ENCODE measurements at regions of chr10 and their contacts with region 1.

Region 1: DNA sequence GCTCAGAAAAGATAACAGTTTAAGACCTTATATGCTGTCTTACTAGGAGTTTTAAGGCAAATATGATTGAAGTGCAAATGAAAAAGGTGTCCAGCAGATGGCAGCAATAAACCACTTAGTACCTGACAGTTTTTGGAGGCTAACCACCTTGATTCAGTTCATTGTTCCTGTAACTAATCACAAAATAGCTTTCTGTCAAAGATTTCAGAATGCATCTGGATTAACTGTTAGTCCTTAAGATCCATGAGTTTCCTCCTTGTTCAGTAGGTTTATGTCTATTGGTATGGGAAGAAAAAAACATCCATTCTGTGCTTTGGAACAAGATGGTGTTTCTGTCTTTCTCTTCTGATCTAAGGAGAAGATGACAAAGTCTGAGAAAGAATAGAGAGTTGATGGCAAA is 46.6 kb downstream of the CCSER2 start:
- DNase-seq: peak; percentile 29
- H3K4me3 ChIP-seq: no peak overlapping the region
- H3K27ac ChIP-seq: no peak overlapping the region; a peak in 1 of 4 replicates
- H3K4me1 ChIP-seq: no peaks in the 10 kb centered on the region; a peak in 1 of 4 replicates
- H3K27me3 ChIP-seq: no peaks in the 10 kb centered on the region
- CTCF ChIP-seq: peak; percentile 83
- EP300 ChIP-seq: no peak
- RAD21 ChIP-seq: peak; percentile 89

Region 2: GRCh38 chr10:84264611-84265141 is 110.3 kb before region 1 on chr10:
- CTCF ChIA-PET with region 1: interaction called, 16 read pairs
- POLR2A ChIA-PET with region 1: no interaction called
- DNase-seq: peak; percentile 78
- H3K4me3 ChIP-seq: peak overlapping the region in 1 of 2 experiments; percentile 43; a peak in 1 of 4 replicates
- H3K27ac ChIP-seq: no peak overlapping the region
- H3K4me1 ChIP-seq: peaks cover 4 to 11% of the 10 kb centered on the region in 2 experiments; a peak in 3 of 4 replicates
- H3K27me3 ChIP-seq: no peaks in the 10 kb centered on the region
- CTCF ChIP-seq: peak; percentile 96
- EP300 ChIP-seq: no peak
- RAD21 ChIP-seq: peak; percentile 93

Region 3: GRCh38 chr10:84296091-84296981 is 78.7 kb before region 1 on chr10:
- CTCF ChIA-PET with region 1: no interaction called
- POLR2A ChIA-PET with region 1: no interaction called
- DNase-seq: no peak
- H3K4me3 ChIP-seq: no peak overlapping the region
- H3K27ac ChIP-seq: peak overlapping the region in 1 of 2 experiments; percentile 83; a peak in 2 of 4 replicates
- H3K4me1 ChIP-seq: peaks cover 7 to 15% of the 10 kb centered on the region in 2 experiments; a peak in 2 of 4 replicates
- H3K27me3 ChIP-seq: no peaks in the 10 kb centered on the region
- CTCF ChIP-seq: no peak
- EP300 ChIP-seq: no peak
- RAD21 ChIP-seq: no peak